Activated naive CD8-positive, alpha-beta T cell treated with anti-CD3 and anti-CD28 coated beads, Interleukin-2, amount 10 ng/mL, durations not matched to agents 7 days and 5 days (primary cell): ENCODE measurements at regions of chr17 and their contacts with region 1.

Region 1: DNA sequence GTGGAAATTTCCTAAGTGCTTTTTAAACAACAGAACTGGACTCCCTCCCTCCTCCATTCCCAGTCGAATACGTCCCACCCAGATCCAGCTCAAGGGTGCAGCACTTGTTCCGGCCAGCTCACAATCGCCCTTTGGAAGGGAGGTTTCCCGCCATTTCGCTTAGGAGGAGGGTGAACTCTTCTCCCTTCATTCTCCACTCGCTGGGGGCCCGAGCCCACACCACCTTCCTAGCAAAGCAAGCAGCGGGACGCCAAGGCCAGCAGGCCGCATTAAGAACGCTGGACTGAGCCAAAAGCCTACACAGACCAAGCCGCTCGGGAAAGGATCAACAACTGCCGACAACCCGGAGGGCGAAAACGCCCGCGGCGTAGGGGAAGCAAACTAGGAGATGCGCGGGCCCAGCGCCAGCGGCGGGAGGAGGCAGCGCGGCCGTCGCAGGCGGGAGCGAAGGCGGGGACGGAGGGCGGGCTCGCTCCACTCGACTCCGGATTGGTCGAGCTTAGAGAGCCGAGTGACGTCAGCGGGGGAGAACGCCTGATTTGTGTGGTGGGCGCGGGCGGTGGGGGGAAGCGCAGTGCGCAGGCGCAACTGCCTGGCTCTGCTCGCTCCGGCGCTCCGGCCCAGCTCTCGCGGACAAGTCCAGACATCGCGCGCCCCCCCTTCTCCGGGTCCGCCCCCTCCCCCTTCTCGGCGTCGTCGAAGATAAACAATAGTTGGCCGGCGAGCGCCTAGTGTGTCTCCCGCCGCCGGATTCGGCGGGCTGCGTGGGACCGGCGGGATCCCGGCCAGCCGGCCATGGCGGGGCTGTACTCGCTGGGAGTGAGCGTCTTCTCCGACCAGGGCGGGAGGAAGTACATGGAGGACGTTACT is at the start of gene PPM1D:
- DNase-seq: peak; percentile 97
- ATAC-seq: peak; percentile 92
- H3K4me3 Mint-ChIP-seq: peak within 1 kb of the TSS; percentile 96
- H3K27ac Mint-ChIP-seq: peak within 1 kb of the TSS; percentile 96
- H3K4me1 Mint-ChIP-seq: peaks cover 33% of the 10 kb centered on the region
- H3K27me3 Mint-ChIP-seq: no peaks in the 10 kb centered on the region
- total RNA-seq, gene PPM1D: 17.1 to 17.5 TPM

Region 2: GRCh38 chr17:60392042-60392844 is 207.6 kb before region 1 on chr17 and contains the start of gene USP32:
- POLR2A ChIA-PET with region 1: interaction called, 13 read pairs
- DNase-seq: peak; percentile 97
- ATAC-seq: peak; percentile 93
- H3K4me3 Mint-ChIP-seq: peak within 1 kb of the TSS; percentile 93
- H3K27ac Mint-ChIP-seq: peak within 1 kb of the TSS; percentile 97
- H3K4me1 Mint-ChIP-seq: peaks cover 45% of the 10 kb centered on the region
- H3K27me3 Mint-ChIP-seq: no peaks in the 10 kb centered on the region
- total RNA-seq, gene USP32: 37.0 to 38.5 TPM

Region 3: GRCh38 chr17:60577147-60577915 is 22.5 kb before region 1 on chr17:
- POLR2A ChIA-PET with region 1: interaction called, 12 read pairs
- DNase-seq: no peak
- ATAC-seq: peak; percentile 68
- H3K4me3 Mint-ChIP-seq: peak overlapping the region; percentile 81
- H3K27ac Mint-ChIP-seq: peak overlapping the region; percentile 52
- H3K4me1 Mint-ChIP-seq: no peaks in the 10 kb centered on the region
- H3K27me3 Mint-ChIP-seq: peaks cover 12% of the 10 kb centered on the region

Region 4: DNA sequence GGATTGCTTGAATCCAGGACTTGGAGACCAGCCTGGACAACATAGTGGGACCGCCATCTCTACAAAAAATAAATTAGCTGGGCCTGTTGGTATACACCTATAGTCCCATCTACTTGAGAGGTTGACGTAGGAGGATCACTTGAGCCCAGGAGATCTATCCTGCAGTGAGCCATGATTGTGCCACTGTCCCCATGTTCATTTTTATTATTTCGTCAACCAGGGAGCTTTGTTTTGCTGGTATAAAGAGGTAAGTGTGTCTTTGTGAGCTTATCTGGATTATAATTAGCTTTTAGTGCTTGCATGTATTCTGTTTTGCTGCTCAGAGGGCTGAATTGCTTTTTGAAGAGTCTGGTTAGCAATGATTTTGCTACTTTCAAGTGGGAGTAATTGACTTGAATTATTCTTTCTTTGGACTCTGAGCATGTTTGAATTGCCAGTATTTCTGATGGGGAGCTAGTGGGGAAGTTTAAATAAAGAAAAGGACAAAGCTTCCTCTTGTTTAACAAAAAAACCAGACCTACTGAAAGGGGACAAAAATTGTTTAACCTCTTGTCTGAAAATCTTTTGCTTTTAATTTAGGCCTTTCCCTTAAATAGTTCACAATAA is 46.2 kb after region 1 on chr17:
- POLR2A ChIA-PET with region 1: no interaction called
- DNase-seq: no peak
- ATAC-seq: no peak
- H3K4me3 Mint-ChIP-seq: no peak overlapping the region
- H3K27ac Mint-ChIP-seq: no peak overlapping the region
- H3K4me1 Mint-ChIP-seq: no peaks in the 10 kb centered on the region
- H3K27me3 Mint-ChIP-seq: no peaks in the 10 kb centered on the region

Region 5: GRCh38 chr17:60677308-60678124 is 77.7 kb after region 1 on chr17 and contains the start of gene BCAS3:
- POLR2A ChIA-PET with region 1: interaction called, 21 read pairs
- DNase-seq: peak; percentile 90
- ATAC-seq: peak; percentile 96
- H3K4me3 Mint-ChIP-seq: peak within 1 kb of the TSS; percentile 89
- H3K27ac Mint-ChIP-seq: peak within 1 kb of the TSS; percentile 86
- H3K4me1 Mint-ChIP-seq: peaks cover 14% of the 10 kb centered on the region
- H3K27me3 Mint-ChIP-seq: no peaks in the 10 kb centered on the region
- total RNA-seq, gene BCAS3: 21.6 to 27.3 TPM